Left lung (tissue), 14 donors: ENCODE measurements at regions of chr2 and their contacts with region 1.

Region 1: GRCh38 chr2:217353591-217353990 is 493.7 kb upstream of the TNP1 start:
- DNase-seq: no peak
- ATAC-seq: no peak
- H3K4me3 ChIP-seq: no peak overlapping the region
- H3K27ac ChIP-seq: no peak overlapping the region
- H3K4me1 ChIP-seq: no peaks in the 10 kb centered on the region
- H3K27me3 ChIP-seq: no peaks in the 10 kb centered on the region
- CTCF ChIP-seq: no peak

Region 2: GRCh38 chr2:217599906-217600305 is 246.3 kb after region 1 on chr2:
- intact Hi-C with region 1: loop called in 1 of 2 experiments (anchors 5 kb)
- DNase-seq: no peak
- ATAC-seq: no peak
- H3K4me3 ChIP-seq: no peak overlapping the region
- H3K27ac ChIP-seq: no peak overlapping the region
- H3K4me1 ChIP-seq: peaks cover 0 to 2% of the 10 kb centered on the region in 2 donors
- H3K27me3 ChIP-seq: no peaks in the 10 kb centered on the region
- CTCF ChIP-seq: no peak